Endothelial cell of umbilical vein (primary cell): ENCODE measurements at regions of chr7 and their contacts with region 1.

Region 1: DNA sequence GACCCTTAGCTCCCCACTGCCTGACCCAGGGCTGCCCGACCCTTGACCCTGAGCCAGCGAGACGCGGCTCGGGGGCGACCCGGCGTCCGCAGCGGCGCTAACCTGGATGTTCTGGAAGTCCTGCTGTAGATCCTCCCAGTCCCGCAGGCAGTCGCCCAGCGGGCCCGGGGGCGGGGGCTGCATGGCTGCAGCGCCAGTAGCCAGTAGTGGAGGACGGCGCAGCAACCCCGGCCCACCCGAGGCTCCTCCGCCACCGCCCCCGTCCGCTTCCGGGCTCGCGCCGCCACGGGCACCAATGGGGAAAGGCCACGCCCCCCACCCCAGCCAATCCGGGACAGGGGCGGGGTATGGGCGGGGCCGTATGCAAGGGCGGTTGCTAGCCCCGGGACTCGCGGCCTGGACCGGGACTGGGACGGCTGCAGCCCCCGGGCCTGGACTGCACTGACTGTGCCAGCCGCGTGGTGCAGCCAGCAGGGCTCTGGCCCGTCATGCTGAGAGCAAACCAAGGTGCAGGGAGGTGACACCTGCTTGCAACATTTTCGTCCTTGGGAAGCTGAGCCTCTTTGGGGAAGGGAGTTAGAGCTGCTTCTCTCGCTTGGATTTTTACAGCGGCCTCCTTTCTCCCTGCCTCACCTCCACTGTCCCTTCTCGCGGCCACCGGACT is at the start of gene TMEM120A:
- DNase-seq: peak; percentile 95
- H3K4me3 ChIP-seq: peak within 1 kb of the TSS; percentile 53 to 96 (median 57)
- H3K27ac ChIP-seq: peak within 1 kb of the TSS; percentile 40
- H3K4me1 ChIP-seq: peaks cover 4% of the 10 kb centered on the region
- H3K27me3 ChIP-seq: no peaks in the 10 kb centered on the region
- CTCF ChIP-seq: peak in 1 of 2 donors; percentile 19
- POLR2A ChIP-seq: peak; percentile 78
- total RNA-seq, gene TMEM120A: 38.6 and 47.3 TPM in 2 replicates

Region 2: GRCh38 chr7:75878769-75879611 is 115.5 kb before region 1 on chr7 and contains the start of gene RHBDD2:
- CTCF ChIA-PET with region 1: no interaction called
- POLR2A ChIA-PET with region 1: no interaction called
- dilution Hi-C with region 1: no loop called
- intact Hi-C with region 1: loop called (anchors 1 kb)
- DNase-seq: peak; percentile 91
- H3K4me3 ChIP-seq: peak within 1 kb of the TSS; percentile 26 to 100 (median 72)
- H3K27ac ChIP-seq: peak within 1 kb of the TSS; percentile 4
- H3K4me1 ChIP-seq: peaks cover 11% of the 10 kb centered on the region
- H3K27me3 ChIP-seq: no peaks in the 10 kb centered on the region
- CTCF ChIP-seq: peak in 1 of 2 donors; percentile 11
- POLR2A ChIP-seq: peak; percentile 95
- total RNA-seq, gene RHBDD2: 36.7 and 44.6 TPM in 2 replicates

Region 3: GRCh38 chr7:75914730-75915585 is 79.6 kb before region 1 on chr7 and contains the start of gene POR:
- CTCF ChIA-PET with region 1: interaction called, 6 read pairs
- POLR2A ChIA-PET with region 1: interaction called, 4 read pairs
- dilution Hi-C with region 1: no loop called
- intact Hi-C with region 1: loop called (anchors 2 kb)
- DNase-seq: peak; percentile 94
- H3K4me3 ChIP-seq: peak within 1 kb of the TSS; percentile 69 to 85 (median 82)
- H3K27ac ChIP-seq: peak within 1 kb of the TSS; percentile 28
- H3K4me1 ChIP-seq: peaks cover 8% of the 10 kb centered on the region
- H3K27me3 ChIP-seq: no peaks in the 10 kb centered on the region
- CTCF ChIP-seq: no peak
- POLR2A ChIP-seq: peak; percentile 99
- total RNA-seq, gene POR: 71.9 and 73.6 TPM in 2 replicates

Region 4: DNA sequence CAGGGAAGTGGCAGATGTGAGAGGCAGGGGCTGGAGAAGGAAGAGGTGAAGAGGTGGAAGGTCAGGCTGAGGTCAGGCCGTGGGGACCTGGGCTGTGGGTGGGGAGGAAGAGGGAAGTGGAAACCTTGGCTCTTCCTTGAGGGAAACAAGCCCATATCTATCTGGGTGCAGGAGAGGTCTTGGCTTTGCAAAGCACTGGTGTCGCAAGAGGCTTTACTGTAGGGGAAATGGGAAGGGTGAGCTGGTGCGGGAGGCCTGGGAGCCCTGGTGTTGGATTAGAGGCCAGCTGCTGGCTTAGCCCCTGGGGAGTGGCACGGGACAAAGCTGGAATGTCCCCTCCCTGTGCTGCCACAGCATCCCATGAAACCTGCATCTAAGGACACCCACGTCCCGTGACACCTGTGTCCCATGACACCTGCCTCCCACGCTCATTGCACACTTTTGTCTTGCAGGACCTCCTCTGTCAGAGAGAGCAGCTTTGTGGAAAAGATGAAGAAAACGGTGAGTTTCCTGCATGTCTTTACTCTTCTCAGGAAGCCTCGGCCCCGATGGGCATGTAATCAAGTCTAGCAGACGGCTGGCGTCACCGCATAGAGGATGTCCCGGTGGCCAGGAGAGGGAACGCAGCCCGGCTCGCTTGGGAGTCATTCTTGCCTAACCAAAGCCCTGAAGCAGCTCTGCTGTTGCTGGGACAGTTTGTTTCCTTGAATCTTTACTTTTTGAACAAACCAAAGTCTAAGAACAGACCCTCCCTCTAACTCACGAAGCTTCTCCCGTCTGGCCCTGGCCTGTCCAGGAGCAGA is 22.4 kb before region 1 on chr7:
- CTCF ChIA-PET with region 1: no interaction called
- POLR2A ChIA-PET with region 1: no interaction called
- dilution Hi-C with region 1: no loop called
- intact Hi-C with region 1: no loop called
- DNase-seq: no peak
- H3K4me3 ChIP-seq: no peak overlapping the region
- H3K27ac ChIP-seq: no peak overlapping the region
- H3K4me1 ChIP-seq: no peaks in the 10 kb centered on the region
- H3K27me3 ChIP-seq: no peaks in the 10 kb centered on the region
- CTCF ChIP-seq: no peak
- POLR2A ChIP-seq: no peak

Region 5: GRCh38 chr7:76340617-76341131 is 346.2 kb after region 1 on chr7:
- CTCF ChIA-PET with region 1: no interaction called
- POLR2A ChIA-PET with region 1: no interaction called
- dilution Hi-C with region 1: no loop called
- intact Hi-C with region 1: no loop called
- DNase-seq: peak; percentile 80
- H3K4me3 ChIP-seq: no peak overlapping the region
- H3K27ac ChIP-seq: peak overlapping the region; percentile 54
- H3K4me1 ChIP-seq: peaks cover 14% of the 10 kb centered on the region
- H3K27me3 ChIP-seq: no peaks in the 10 kb centered on the region
- CTCF ChIP-seq: no peak
- POLR2A ChIP-seq: no peak